Right lobe of liver (tissue), 6 donors: ENCODE measurements at regions of chr6 and their contacts with region 1.

Region 1: DNA sequence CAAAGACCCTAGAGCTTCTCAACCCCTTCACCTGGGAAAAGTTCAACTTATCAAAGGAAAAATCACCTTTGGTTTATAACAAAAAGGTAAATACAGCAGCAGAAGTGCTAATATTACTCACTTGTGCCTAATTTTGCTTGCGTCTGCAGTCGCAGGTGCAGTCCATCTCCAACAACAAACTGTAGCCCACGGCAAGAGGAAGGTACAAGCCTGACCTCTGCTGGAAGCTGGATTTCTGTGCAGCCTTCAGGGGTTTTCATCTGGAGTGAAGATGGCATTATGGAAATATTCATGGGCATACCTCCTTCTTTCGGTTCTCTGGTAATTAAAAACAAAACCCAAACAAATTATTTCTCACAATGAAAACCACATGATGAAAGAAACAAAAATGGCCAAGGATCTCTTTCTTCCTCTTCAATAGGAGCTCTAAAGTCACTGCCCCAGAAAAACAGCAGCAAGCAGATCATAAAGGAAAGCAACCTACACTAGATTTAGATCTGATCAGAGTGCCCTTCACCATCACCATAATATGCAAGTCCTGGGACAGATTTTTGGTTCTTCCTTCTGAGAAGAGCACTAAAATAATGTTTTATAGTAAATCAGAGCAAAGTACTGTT is 7.8 kb downstream of the UBE3D start:
- DNase-seq: peak in 1 of 3 donors; percentile 27
- ATAC-seq: peak; percentile 83 to 91 (median 86)
- H3K4me3 ChIP-seq: no peak overlapping the region
- H3K27ac ChIP-seq: no peak overlapping the region
- H3K4me1 ChIP-seq: peaks cover 0 to 4% (median 0%) of the 10 kb centered on the region in 4 donors
- H3K27me3 ChIP-seq: no peaks in the 10 kb centered on the region
- CTCF ChIP-seq: peak; percentile 55 to 76 (median 70)
- POLR2A ChIP-seq: no peak

Region 2: DNA sequence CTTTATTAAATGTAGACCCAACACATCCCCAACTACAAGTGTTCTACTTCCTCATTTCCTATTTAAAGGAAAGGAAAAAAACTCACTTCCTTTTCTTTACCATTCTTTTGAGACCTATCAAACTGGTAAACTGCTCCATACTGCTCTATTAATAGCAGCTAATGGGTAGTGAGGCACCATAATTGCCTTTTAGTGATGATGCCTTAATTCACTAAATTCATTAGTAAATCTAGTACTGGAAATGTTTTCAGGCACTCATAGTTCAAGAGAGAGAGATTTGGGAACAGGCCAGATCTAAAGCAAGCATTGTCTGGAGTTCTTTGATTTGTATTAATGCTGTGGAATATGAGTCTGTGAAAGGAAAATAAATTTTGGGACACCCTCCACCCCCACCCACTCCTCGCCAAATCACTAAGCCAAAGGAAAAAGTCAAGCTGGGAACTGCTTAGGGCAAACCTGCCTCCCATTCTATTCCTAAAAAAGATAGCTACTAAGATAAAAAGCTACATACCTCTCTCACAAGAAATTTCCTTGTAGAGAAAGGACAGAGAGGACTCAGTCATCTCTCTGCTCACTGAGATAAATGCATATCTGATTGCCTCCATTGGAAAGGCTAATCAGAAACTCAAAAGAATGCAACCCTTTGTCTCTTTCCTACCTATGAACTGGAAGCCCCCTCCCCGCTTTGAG is 796.7 kb before region 1 on chr6:
- intact Hi-C with region 1: loop called in 1 of 2 experiments (anchors 10 kb)
- DNase-seq: no peak
- ATAC-seq: no peak
- H3K4me3 ChIP-seq: no peak overlapping the region
- H3K27ac ChIP-seq: no peak overlapping the region
- H3K4me1 ChIP-seq: no peaks in the 10 kb centered on the region
- H3K27me3 ChIP-seq: no peaks in the 10 kb centered on the region
- CTCF ChIP-seq: no peak
- POLR2A ChIP-seq: no peak

Region 3: GRCh38 chr6:82270881-82271645 is 786.8 kb before region 1 on chr6:
- intact Hi-C with region 1: loop called (anchors 10 kb)
- DNase-seq: no peak
- ATAC-seq: peak; percentile 62 to 76 (median 72)
- H3K4me3 ChIP-seq: no peak overlapping the region
- H3K27ac ChIP-seq: no peak overlapping the region
- H3K4me1 ChIP-seq: no peaks in the 10 kb centered on the region
- H3K27me3 ChIP-seq: no peaks in the 10 kb centered on the region
- CTCF ChIP-seq: peak; percentile 62 to 78 (median 71)
- POLR2A ChIP-seq: no peak

Region 4: GRCh38 chr6:82364087-82365015 is 693.5 kb before region 1 on chr6:
- intact Hi-C with region 1: loop called in 1 of 2 experiments (anchors 5 kb)
- DNase-seq: peak in 2 of 3 donors; percentile 31 to 52
- ATAC-seq: peak; percentile 56 to 72 (median 64)
- H3K4me3 ChIP-seq: peak overlapping the region; percentile 45 to 58 (median 54)
- H3K27ac ChIP-seq: peak overlapping the region in 1 of 3 donors; percentile 34
- H3K4me1 ChIP-seq: peaks cover 0 to 17% (median 4%) of the 10 kb centered on the region in 4 donors
- H3K27me3 ChIP-seq: peaks cover 0 to 9% of the 10 kb centered on the region in 2 donors
- CTCF ChIP-seq: no peak
- POLR2A ChIP-seq: no peak

Region 5: DNA sequence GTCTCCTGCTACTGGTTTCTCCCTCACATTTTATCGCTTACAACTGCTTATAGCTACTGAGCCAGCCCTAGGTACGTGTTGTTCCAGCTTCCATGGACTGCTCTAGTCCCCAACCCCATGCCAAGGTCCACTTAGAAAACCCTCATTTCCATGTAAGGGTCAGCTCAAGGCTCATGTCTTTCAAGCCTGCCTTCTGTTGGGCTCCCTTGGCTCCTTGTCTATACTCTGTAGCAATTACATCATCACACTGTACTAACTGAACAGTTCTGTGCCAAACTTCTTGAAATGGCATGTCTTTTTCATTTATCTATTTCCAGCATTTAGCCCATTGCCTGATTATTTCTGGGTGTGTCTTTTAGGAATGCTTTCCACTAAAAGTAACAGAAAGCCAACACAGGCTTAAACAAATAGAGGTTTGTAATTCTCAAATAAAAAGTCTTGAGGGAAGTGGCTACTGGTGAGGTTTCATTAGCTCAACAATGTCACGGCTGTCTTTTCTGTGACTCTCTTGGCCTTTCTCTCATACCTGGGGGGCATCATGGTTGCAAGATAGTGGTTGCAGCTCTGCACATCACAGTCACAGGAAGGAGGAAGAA is 376.6 kb before region 1 on chr6:
- intact Hi-C with region 1: no loop called
- DNase-seq: no peak
- ATAC-seq: no peak
- H3K4me3 ChIP-seq: no peak overlapping the region
- H3K27ac ChIP-seq: no peak overlapping the region
- H3K4me1 ChIP-seq: no peaks in the 10 kb centered on the region
- H3K27me3 ChIP-seq: no peaks in the 10 kb centered on the region
- CTCF ChIP-seq: no peak
- POLR2A ChIP-seq: no peak